CD4-positive, alpha-beta memory T cell (primary cell): ENCODE measurements at regions of chr6 and their contacts with region 1.

Region 1: GRCh38 chr6:137811121-137811915 is 55.7 kb upstream of the TNFAIP3 start:
- DNase-seq: peak; percentile 68 to 93 (median 75)
- H3K4me3 ChIP-seq: peak overlapping the region in 1 of 2 donors; percentile 25
- H3K4me3 Mint-ChIP-seq: peak overlapping the region in 7 of 8 donors; percentile 47 to 86 (median 77)
- H3K27ac ChIP-seq: peak overlapping the region; percentile 65
- H3K27ac Mint-ChIP-seq: peak overlapping the region; percentile 83 to 98 (median 95)
- H3K4me1 ChIP-seq: peaks cover 28% of the 10 kb centered on the region
- H3K4me1 Mint-ChIP-seq: peaks cover 23 to 38% (median 30%) of the 10 kb centered on the region in 4 donors
- H3K27me3 ChIP-seq: no peaks in the 10 kb centered on the region
- H3K27me3 Mint-ChIP-seq: no peaks in the 10 kb centered on the region

Region 2: GRCh38 chr6:137823826-137824555 is 12.7 kb after region 1 on chr6:
- CTCF ChIA-PET with region 1: interaction called, 6 read pairs
- POLR2A ChIA-PET with region 1: interaction called, 25 read pairs
- intact Hi-C with region 1: loop called (anchors 1 kb)
- DNase-seq: peak; percentile 92 to 99 (median 97)
- H3K4me3 ChIP-seq: no peak overlapping the region
- H3K4me3 Mint-ChIP-seq: peak overlapping the region; percentile 52 to 87 (median 77)
- H3K27ac ChIP-seq: peak overlapping the region; percentile 95
- H3K27ac Mint-ChIP-seq: peak overlapping the region; percentile 93 to 100 (median 100)
- H3K4me1 ChIP-seq: peaks cover 74% of the 10 kb centered on the region
- H3K4me1 Mint-ChIP-seq: peaks cover 44 to 75% (median 59%) of the 10 kb centered on the region in 4 donors
- H3K27me3 ChIP-seq: no peaks in the 10 kb centered on the region
- H3K27me3 Mint-ChIP-seq: no peaks in the 10 kb centered on the region